Motor neuron (in vitro differentiated cells): ENCODE measurements at regions of chr21 and their contacts with region 1.

Region 1: DNA sequence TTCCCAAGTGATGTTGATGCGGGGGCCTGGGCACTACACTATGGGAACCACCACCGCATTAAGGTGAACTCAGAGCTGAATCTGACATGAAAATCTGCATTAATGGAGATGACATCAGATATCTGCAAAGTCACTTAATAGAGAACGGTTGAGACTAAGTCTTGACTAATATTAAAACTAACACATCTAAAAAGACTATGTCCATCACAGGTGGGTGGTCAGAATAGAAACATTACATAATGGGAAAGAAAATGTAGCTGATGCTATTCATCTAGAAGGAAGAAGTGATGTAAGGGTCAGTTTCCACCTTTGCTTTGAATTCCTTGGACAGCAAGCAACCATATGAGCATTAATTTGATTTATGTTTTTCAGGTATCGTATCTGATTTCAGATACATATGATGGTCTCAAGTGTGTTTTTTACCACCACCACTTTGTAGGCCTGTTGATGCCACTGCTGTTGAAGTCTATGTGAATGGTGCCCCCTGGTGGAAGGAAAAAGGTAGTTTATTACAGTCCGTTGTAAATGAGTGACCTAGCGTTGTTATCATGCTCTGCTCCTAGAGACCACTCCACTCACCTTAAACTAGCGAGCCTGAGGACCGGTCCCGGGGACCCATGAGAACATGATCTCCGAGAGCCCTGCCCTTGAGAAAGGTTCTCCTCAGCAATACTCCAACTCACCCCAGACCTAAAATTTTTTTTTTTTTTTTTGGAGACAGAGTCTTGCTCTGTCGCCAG is 73.5 kb downstream of the BACH1 start:
- ATAC-seq: peak in 6 of 8 experiments; percentile 43 to 97 (median 80)
- H3K4me3 ChIP-seq: no peak overlapping the region
- H3K27ac ChIP-seq: no peak overlapping the region
- H3K4me1 ChIP-seq: no peaks in the 10 kb centered on the region

Region 2: DNA sequence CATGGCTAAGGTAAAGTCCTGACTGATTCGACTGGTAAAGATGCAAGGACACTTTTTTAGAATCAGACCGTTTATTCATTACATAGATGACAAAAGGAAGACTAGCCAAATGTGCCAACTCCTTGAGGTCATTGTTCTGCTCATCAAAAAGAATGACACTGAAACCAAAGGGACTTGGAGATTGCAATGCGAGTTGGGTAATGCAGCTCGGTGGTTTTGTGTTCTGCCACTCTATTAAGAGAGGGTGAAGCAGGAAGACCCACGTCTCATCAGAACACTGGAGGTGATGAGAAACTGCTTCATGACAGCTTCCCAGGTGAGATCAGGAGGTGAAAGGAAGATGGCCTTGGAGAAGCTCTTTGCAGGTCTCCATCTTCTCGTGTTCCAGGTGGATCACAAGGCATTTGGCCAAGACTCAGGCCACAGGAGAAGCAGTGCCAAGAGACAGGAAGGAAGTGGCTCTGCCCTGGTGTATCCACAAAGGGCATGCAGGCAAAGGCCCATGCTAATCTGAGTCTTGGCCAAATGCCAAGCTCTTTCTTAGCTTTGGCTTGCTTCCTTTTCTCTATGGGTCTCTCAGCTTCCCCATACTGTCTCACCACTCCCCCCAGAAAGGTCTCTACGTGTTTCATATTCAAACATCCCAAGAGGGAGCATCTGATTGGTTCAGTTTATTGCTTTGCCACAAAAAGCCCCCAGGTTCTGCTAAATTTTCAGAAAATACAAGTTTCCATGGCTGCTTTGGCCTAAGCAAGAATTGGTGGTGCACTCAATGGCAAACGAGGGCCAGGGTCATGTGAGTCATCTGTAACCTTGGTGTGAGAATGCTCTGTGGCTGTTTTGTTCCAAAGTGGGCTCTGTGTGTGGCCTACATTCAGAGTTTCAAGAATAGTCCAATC is 293.1 kb before region 1 on chr21:
- in situ Hi-C with region 1: loop called in 1 of 9 experiments (anchors 10 kb)
- ATAC-seq: peak in 3 of 8 experiments; percentile 35 to 72 (median 47)
- H3K4me3 ChIP-seq: no peak overlapping the region
- H3K27ac ChIP-seq: no peak overlapping the region
- H3K4me1 ChIP-seq: peaks cover 1 to 7% of the 10 kb centered on the region in 2 donors

Region 3: GRCh38 chr21:29164325-29164942 is 207.8 kb before region 1 on chr21:
- in situ Hi-C with region 1: loop called in 3 of 9 experiments (anchors 10 kb)
- ATAC-seq: peak in 4 of 8 experiments; percentile 55 to 90 (median 70)
- H3K4me3 ChIP-seq: no peak overlapping the region
- H3K27ac ChIP-seq: no peak overlapping the region
- H3K4me1 ChIP-seq: no peaks in the 10 kb centered on the region